ENCODE measurements at regions of chr1 and their contacts with region 1.

Region 1: DNA sequence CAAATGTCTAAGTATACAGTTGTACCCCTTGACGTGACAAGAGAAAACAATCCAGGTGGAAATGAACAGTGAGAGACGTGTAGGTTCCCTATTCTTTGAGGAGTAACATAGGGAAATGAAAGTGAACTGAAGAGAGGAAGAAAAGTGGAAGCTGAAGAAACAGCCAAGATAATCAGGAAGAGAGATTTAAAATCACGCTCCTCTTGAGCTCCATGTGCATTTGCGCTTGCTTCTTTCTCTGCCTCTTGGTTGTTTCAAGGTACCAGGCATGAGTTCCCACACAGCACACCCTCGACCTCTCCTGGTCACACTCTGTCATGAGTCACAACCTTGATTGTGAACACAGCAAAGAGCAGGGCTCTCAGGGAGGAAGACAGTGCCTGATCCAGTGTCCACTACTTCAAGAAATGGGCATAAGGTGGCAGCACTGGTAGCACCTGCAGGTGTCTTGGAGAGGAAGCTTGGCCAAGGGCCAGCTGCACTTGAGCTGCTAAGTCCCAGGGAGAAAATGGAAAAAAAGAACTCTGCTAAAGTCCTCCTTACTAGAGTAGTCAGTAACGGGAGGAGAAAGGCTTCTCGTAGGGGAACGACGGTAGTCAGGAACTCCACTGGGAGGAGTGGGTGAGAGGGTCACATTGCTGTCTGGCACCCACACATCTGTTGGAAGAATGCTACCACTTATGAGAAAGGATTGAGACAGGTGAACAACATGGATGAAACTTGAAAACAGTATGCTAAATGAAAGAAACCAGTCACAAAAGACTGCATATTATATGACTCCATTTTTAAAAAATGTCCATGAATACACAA is 18.3 kb upstream of the ARID1A start:
- DNase-seq: peak; percentile 57
- ATAC-seq: peak; percentile 100
- H3K4me3 Mint-ChIP-seq: no peak overlapping the region
- H3K27ac Mint-ChIP-seq: peak overlapping the region; percentile 9; the same call in 1 of the 2 replicates
- H3K4me1 Mint-ChIP-seq: peaks cover 8% of the 10 kb centered on the region
- H3K27me3 Mint-ChIP-seq: no peaks in the 10 kb centered on the region
- CTCF ChIP-seq: no peak

Region 2: GRCh38 chr1:26363549-26364448 is 313.7 kb before region 1 on chr1:
- CTCF ChIA-PET with region 1: no interaction called
- POLR2A ChIA-PET with region 1: no interaction called
- DNase-seq: peak; percentile 87
- ATAC-seq: peak; percentile 54
- H3K4me3 Mint-ChIP-seq: no peak overlapping the region
- H3K27ac Mint-ChIP-seq: no peak overlapping the region
- H3K4me1 Mint-ChIP-seq: peaks cover 26% of the 10 kb centered on the region
- H3K27me3 Mint-ChIP-seq: peaks cover 43% of the 10 kb centered on the region
- CTCF ChIP-seq: peak; percentile 79

Region 3: GRCh38 chr1:26626994-26627393 is 50.5 kb before region 1 on chr1:
- CTCF ChIA-PET with region 1: interaction called, 11 read pairs
- POLR2A ChIA-PET with region 1: no interaction called
- DNase-seq: no peak
- ATAC-seq: no peak
- H3K4me3 Mint-ChIP-seq: no peak overlapping the region
- H3K27ac Mint-ChIP-seq: no peak overlapping the region
- H3K4me1 Mint-ChIP-seq: peaks cover 3% of the 10 kb centered on the region; the same call in 1 of the 2 replicates
- H3K27me3 Mint-ChIP-seq: peaks cover 7% of the 10 kb centered on the region
- CTCF ChIP-seq: no peak

Region 4: DNA sequence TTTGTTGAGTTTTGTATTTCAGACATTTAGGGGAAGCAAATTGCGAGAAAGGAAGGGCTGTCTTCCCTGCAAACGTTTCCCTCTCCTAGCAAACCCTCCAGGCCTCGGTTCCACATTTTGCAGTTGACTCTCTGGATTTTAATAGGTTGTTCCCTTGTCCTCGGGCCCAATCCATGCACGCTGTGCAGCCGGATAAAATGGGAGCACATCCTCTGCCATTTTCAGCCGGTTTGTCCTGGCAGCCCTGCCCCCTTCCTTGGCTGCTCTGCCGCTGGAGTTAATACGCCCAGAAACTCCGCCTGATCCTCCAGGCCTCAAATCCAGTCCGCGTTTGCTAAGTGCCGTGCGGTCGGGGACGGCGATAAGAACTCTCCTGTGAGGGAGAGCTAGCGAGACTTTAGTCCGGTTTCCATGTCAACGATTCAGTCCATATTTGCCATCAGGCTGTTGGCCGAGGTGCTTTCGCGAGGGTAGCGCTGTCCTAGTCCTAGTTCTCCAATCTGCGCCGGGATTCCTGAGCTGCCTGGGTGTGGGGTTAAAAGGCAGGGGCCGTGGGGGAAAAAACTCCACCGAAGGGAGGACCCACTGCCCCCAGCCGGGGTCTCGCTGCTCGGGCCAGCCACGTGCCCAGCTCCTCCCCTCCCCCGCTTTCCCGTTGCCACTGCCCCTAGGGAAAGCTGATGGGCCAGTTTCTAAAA is 15.4 kb after region 1 on chr1:
- CTCF ChIA-PET with region 1: interaction called, 54 read pairs
- POLR2A ChIA-PET with region 1: interaction called, 4 read pairs
- DNase-seq: peak; percentile 93
- ATAC-seq: peak; percentile 65
- H3K4me3 Mint-ChIP-seq: peak overlapping the region; percentile 86
- H3K27ac Mint-ChIP-seq: peak overlapping the region; percentile 100
- H3K4me1 Mint-ChIP-seq: peaks cover 34% of the 10 kb centered on the region
- H3K27me3 Mint-ChIP-seq: no peaks in the 10 kb centered on the region
- CTCF ChIP-seq: no peak

Region 5: GRCh38 chr1:26723013-26723991 is 45.8 kb after region 1 on chr1:
- CTCF ChIA-PET with region 1: interaction called, 13 read pairs
- POLR2A ChIA-PET with region 1: no interaction called
- DNase-seq: peak; percentile 72
- ATAC-seq: peak; percentile 80
- H3K4me3 Mint-ChIP-seq: peak overlapping the region; percentile 59
- H3K27ac Mint-ChIP-seq: peak overlapping the region; percentile 78
- H3K4me1 Mint-ChIP-seq: peaks cover 82% of the 10 kb centered on the region
- H3K27me3 Mint-ChIP-seq: no peaks in the 10 kb centered on the region
- CTCF ChIP-seq: no peak

Region 6: DNA sequence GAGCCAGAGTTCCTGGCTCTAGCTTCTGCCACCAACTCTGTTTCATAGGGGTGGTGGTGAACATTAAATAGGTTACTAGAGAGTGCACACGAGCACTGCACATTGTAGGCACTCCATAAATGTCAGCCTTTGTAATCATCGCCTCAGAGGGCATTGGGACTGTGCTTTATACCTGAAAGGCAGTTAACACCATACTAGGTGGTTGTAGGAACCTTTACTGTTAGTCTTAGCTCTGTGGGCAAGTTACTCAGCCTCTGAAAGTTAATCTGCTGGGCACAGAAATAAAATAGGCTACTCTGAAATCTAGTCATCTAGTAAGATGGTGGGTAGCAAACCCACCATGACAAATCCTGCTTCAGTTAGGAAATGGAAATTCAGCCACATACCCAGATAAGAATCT is 55.9 kb after region 1 on chr1:
- CTCF ChIA-PET with region 1: no interaction called
- POLR2A ChIA-PET with region 1: no interaction called
- DNase-seq: no peak
- ATAC-seq: no peak
- H3K4me3 Mint-ChIP-seq: no peak overlapping the region
- H3K27ac Mint-ChIP-seq: no peak overlapping the region
- H3K4me1 Mint-ChIP-seq: peaks cover 6% of the 10 kb centered on the region
- H3K27me3 Mint-ChIP-seq: no peaks in the 10 kb centered on the region
- CTCF ChIP-seq: no peak

Region 7: GRCh38 chr1:26856604-26857469 is 179.3 kb after region 1 on chr1:
- CTCF ChIA-PET with region 1: no interaction called
- POLR2A ChIA-PET with region 1: no interaction called
- DNase-seq: no peak
- ATAC-seq: peak; percentile 44
- H3K4me3 Mint-ChIP-seq: no peak overlapping the region
- H3K27ac Mint-ChIP-seq: peak overlapping the region; percentile 70
- H3K4me1 Mint-ChIP-seq: peaks cover 19% of the 10 kb centered on the region
- H3K27me3 Mint-ChIP-seq: no peaks in the 10 kb centered on the region
- CTCF ChIP-seq: no peak

Measured in WTC11 (cell line).